Breast epithelium (tissue), 4 donors: ENCODE measurements at regions of chr3 and their contacts with region 1.

Region 1: DNA sequence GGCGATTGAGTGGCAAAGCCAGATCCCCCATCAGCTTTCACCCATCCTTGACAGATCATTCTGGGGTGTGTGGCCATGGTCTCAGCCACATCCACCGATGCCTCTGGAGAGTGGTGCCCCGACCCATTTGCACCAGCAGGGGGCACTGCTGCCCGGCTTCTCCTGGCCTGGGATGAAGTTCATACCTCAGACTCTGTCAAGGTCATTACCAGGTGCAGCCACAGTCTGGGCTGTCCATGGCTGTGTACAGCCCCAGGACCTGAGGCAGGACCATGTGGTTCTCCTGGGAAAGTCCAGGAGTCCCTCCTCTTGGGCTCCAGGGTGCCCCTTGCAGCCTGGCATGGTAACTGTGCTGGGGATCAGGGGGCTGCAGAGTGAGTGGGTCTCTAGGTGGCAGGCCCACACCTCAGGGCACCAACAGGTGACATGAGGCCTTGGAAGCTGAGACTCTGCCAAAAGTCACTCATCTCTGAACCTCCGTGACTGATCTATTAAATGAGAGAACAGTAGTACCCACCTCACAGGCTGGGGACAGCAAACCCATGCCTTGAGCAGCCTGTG is 67.2 kb downstream of the CACNA2D2 start:
- DNase-seq: peak; percentile 43 to 78
- H3K4me3 ChIP-seq: no peak overlapping the region
- H3K27ac ChIP-seq: no peak overlapping the region
- H3K4me1 ChIP-seq: no peaks in the 10 kb centered on the region
- H3K27me3 ChIP-seq: no peaks in the 10 kb centered on the region
- CTCF ChIP-seq: peak; percentile 50 to 80 (median 70)
- POLR2A ChIP-seq: no peak

Region 2: DNA sequence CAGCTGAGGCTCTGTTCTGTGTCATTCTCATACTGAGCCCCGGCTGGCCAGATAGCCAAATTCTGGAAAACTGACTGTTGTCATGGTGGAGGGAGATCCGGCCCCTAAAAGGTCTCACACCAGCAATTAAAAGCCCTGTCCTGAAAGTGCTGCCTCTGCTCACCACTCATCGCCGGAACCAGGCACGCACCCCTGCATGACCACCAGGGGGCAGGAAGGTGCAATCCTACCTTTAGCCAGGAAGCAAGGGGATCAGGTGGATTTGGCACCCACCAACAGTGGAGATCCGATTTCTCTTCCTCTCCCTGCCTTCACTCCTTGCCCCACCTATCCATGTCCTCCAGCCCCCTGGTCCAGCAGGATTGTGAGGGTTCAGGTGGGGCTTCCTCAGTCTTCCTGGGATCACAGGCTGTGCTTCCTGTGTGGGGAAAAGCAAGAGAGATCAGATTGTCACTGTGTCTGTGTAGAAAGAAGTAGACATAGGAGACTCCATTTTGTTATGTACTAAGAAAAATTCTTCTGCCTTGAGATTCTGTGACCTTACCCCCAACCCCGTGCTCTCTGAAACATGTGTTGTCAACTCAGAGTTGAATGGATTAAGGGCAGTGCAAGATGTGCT is 83.4 kb after region 1 on chr3:
- intact Hi-C with region 1: loop called (anchors 10 kb)
- DNase-seq: peak; percentile 46 to 74
- H3K4me3 ChIP-seq: no peak overlapping the region
- H3K27ac ChIP-seq: no peak overlapping the region
- H3K4me1 ChIP-seq: peaks cover 0 to 6% of the 10 kb centered on the region in 2 donors
- H3K27me3 ChIP-seq: no peaks in the 10 kb centered on the region
- CTCF ChIP-seq: peak; percentile 75 to 82 (median 75)
- POLR2A ChIP-seq: no peak

Region 3: DNA sequence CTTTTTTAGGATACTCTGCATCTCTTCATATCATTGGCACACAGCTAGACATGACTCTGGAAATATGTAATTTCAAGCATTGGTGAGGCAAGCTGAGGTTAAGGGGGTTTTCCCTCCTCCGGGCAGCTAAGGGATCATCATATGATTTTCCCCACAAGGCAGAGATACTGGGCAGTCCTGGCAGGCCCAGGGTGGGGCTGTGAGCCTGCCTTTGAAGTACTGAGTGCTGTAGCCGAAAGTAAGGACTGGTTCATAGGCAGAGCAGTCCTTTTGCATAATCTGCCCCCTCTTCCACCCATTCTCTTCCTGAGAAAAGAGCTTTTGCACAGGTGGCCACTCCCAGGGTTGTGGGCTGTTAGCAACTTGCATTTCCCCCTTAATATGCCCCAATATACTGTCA is 780.1 kb after region 1 on chr3:
- intact Hi-C with region 1: loop called (anchors 5 kb)
- DNase-seq: no peak
- H3K4me3 ChIP-seq: no peak overlapping the region
- H3K27ac ChIP-seq: no peak overlapping the region
- H3K4me1 ChIP-seq: no peaks in the 10 kb centered on the region
- H3K27me3 ChIP-seq: no peaks in the 10 kb centered on the region
- CTCF ChIP-seq: no peak
- POLR2A ChIP-seq: no peak